CD8-positive, alpha-beta T cell (primary cell): ENCODE measurements at regions of chr6 and their contacts with region 1.

Region 1: DNA sequence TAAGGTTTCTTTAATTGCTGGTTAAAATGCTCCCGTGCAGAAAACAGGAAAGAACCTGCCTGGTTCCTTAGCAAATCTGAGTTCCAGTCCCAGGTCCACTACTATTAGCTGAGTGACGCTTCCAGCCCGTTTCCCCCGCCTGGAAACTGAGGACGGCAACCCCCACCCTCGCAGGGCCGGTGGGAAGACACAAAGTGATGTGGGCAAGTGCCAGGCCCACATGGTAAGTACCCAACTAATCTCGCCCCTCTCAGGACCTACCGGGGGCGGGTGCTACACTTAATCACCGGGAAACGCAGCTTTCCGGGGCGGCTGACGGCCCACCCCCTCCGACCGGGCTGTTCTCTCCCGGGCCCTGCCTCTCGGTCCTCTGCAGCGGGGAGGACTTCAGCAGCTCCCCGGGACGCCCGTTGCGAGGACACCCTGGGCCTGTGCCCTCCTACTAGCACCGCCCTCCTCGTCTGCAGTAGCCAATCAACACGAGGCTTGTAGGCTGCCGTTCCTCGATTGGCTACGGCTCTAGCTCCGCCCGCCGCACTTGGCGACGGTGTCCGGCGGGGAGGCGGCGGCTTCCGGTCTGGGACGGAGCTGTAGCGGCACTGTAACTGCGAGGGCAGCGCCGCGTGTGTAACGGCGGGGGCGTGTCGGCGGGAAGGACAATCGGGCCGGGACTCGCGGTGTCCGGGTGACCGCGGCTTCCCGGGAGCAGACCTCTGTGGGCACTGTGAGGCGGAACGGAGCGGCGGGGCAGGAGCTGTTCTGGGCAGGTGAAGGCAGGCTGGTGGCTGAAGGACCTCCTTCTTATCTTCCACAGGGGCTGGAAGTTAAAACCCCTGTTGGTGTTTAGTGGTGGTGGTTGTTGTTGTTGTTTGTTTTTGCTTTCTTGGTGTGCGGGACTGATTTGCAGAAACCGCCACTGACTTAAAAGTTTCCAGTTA is at the start of gene ZBTB9:
- DNase-seq: peak; percentile 86 to 96 (median 93)
- ATAC-seq: peak; percentile 98
- H3K4me3 ChIP-seq: peak within 1 kb of the TSS; percentile 92 to 93
- H3K4me3 Mint-ChIP-seq: peak within 1 kb of the TSS; percentile 98
- H3K27ac ChIP-seq: peak within 1 kb of the TSS; percentile 75 to 81
- H3K27ac Mint-ChIP-seq: peak within 1 kb of the TSS; percentile 97
- H3K4me1 ChIP-seq: peaks cover 23% of the 10 kb centered on the region
- H3K4me1 Mint-ChIP-seq: peaks cover 43% of the 10 kb centered on the region
- H3K27me3 ChIP-seq: no peaks in the 10 kb centered on the region
- H3K27me3 Mint-ChIP-seq: no peaks in the 10 kb centered on the region
- CTCF ChIP-seq: no peak
- total RNA-seq, gene ZBTB9: 7.1 to 9.5 TPM

Region 2: DNA sequence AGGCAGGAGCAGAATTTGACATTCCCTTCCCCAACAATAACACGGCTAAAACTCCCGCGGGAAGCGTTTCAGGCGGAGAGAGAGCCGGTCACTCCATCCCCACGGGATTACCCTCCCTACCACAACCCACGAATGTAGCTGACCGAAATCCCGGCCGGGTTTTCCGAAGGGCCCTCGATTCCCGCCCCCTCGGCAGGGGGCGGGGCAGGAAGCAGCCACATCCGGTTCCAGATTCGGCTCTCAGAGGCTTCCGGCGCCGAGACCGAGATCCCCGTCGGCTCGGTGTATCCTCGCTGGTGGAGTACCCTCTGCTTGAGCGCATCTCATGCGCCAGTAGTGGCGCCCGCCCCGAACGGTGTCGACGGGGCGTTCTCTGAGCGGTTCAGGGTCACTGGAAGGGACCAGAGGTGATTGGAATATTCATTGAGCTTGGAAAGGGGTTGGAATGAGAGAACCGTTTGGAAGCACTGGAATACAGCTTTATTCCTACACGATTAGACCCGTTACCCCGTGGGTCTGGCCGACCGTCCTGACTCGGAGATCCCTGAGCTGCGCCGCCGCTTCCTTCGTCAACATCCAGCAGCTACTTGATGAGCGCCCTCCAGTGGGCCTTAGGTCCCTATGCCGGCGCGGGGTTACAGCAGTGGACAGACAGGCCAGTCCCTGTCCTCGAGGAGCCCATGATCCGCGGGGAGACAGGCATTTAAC is 154.9 kb before region 1 on chr6:
- CTCF ChIA-PET with region 1: no interaction called
- POLR2A ChIA-PET with region 1: interaction called, 3 read pairs
- intact Hi-C with region 1: loop called in 1 of 2 experiments (anchors 1 kb)
- DNase-seq: peak; percentile 82 to 97 (median 94)
- ATAC-seq: peak; percentile 83
- H3K4me3 ChIP-seq: peak overlapping the region; percentile 88 to 91
- H3K4me3 Mint-ChIP-seq: peak overlapping the region; percentile 99
- H3K27ac ChIP-seq: peak overlapping the region; percentile 83 to 96
- H3K27ac Mint-ChIP-seq: peak overlapping the region; percentile 99
- H3K4me1 ChIP-seq: peaks cover 14% of the 10 kb centered on the region
- H3K4me1 Mint-ChIP-seq: peaks cover 41% of the 10 kb centered on the region
- H3K27me3 ChIP-seq: no peaks in the 10 kb centered on the region
- H3K27me3 Mint-ChIP-seq: no peaks in the 10 kb centered on the region
- CTCF ChIP-seq: peak; percentile 70

Region 3: DNA sequence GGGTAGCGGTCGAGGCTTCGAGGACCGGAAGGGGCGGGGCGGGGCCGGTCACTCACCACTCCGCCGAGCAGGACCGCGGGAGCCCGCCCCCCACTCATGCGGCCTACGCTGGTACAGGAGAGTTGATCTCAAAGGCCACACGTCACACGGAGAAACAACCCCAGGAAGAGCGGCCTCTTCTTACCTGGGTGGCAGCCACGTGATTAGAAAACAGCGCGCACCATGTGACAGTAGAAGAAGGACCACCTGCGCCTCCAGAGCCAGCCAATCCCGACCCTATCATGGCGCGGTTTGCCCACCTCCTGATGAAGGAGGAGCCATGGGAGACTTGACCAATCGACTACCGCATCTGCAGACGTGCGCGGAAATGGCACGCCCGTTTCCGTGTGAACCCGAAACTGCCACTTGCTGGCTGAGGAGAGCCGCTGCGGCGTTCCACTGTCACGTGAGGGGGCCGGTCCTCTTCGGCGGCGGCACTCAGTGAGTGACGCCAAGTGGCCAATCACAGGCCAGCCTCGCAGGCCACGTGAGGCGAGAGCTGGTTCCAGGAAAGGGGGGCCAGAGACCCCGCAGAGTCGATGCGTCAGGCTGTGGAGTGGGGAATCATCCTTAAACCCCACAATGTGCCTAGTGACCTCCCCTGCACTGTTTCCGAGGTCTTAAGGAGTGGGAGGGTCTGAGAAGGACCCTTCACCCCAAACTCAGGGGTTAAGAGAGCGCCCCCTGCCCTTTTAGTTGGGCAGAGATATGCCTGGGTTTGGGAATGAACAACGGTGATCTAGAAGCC is 36.2 kb before region 1 on chr6 and contains the start of gene CUTA:
- CTCF ChIA-PET with region 1: interaction called, 4 read pairs
- POLR2A ChIA-PET with region 1: interaction called, 6 read pairs
- intact Hi-C with region 1: loop called in 1 of 2 experiments (anchors 2 kb)
- DNase-seq: peak; percentile 96 to 100 (median 99)
- ATAC-seq: peak; percentile 87
- H3K4me3 ChIP-seq: peak within 1 kb of the TSS; percentile 68 to 70
- H3K4me3 Mint-ChIP-seq: peak within 1 kb of the TSS; percentile 94
- H3K27ac ChIP-seq: peak within 1 kb of the TSS; percentile 83 to 88
- H3K27ac Mint-ChIP-seq: peak within 1 kb of the TSS; percentile 97
- H3K4me1 ChIP-seq: peaks cover 68% of the 10 kb centered on the region
- H3K4me1 Mint-ChIP-seq: peaks cover 83% of the 10 kb centered on the region
- H3K27me3 ChIP-seq: no peaks in the 10 kb centered on the region
- H3K27me3 Mint-ChIP-seq: no peaks in the 10 kb centered on the region
- CTCF ChIP-seq: peak; percentile 27
- total RNA-seq, gene CUTA: 159 to 177 TPM

Region 4: DNA sequence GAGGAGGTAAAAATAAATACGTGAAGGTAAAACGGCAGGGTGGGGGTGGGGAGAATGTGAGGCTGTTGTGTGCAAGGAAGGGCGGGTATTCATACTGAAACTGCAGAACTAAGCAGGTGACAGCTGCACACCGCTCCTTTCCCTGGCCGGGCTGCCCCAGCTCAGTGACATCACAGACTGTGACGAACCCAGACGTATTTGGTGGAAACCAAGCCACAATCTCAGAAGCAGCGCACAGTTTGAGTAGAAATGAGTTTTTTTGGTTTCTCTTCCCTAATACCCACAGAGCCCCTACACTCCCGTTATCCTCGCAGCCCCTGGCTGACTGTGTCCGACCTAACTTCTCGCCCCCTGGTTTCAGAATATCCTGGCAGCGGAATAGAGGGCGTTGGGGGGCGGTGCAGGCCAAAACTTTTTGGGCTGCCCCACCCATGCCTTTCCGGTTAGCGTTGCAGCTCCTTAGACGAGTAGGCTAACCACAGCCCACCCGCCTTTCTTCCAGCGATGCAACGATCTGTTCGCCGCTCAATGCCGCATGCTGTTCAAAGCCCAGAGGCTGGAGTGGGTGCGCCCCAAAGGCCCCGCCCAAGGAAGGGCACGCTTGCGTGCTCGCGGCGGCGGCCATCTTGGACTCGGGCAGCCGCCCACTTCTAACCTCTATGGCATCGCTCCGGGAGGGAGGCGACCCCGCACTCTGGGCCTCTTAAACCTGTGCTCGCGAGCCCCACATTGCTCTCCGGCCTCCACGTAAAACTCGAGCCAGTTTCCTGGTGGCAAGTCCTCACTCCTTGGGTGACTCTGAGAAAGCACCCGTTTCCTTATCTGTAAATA is 116.7 kb after region 1 on chr6:
- CTCF ChIA-PET with region 1: no interaction called
- POLR2A ChIA-PET with region 1: interaction called, 16 read pairs
- intact Hi-C with region 1: loop called (anchors 1 kb)
- DNase-seq: peak; percentile 86 to 98 (median 92)
- ATAC-seq: peak; percentile 86
- H3K4me3 ChIP-seq: peak overlapping the region; percentile 57 to 67
- H3K4me3 Mint-ChIP-seq: peak overlapping the region; percentile 92
- H3K27ac ChIP-seq: peak overlapping the region; percentile 93 to 99
- H3K27ac Mint-ChIP-seq: peak overlapping the region; percentile 100
- H3K4me1 ChIP-seq: peaks cover 20% of the 10 kb centered on the region
- H3K4me1 Mint-ChIP-seq: peaks cover 29% of the 10 kb centered on the region
- H3K27me3 ChIP-seq: no peaks in the 10 kb centered on the region
- H3K27me3 Mint-ChIP-seq: no peaks in the 10 kb centered on the region
- CTCF ChIP-seq: no peak

Region 5: DNA sequence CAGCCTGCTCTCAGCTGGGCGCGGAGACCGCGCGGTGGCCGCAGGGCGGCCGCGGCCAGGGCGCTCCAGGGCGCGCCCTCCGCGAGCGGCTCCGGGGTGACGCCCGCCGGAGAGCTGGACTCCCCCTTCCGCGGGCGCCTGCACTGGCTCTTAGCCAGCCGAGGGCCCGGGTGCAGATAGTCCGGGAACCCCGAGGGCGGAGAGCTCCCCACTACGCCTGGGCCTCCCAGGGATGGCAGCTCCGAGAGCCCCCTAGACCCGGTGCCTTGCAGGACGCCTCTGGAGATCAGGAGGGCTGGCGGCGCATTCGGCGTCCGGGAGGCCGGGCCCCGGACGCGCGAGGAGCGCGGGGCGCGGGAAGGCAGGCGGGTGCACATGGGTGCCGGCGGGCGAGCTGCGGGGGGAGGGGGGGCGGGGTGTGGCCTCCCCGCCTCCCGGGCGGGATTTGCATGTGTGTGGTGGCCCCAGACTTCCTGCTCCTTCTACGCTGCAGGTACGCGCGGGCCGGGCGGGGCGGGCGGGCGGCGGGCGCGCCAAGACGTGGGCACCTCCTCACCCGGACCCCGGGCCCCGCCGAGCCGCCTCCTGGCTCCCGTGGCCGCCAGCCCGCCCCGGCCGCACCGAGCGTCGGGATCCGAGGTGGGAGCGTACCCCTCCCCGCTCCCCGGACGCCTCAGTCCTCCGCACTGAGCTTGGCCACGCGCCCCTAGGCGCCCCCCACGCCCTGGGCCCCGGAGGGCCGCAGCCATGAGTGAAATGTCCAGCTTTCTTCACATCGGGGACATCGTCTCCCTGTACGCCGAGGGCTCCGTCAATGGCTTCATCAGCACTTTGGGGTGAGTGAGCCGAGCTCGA is 166.8 kb after region 1 on chr6 and contains the start of gene ITPR3:
- CTCF ChIA-PET with region 1: no interaction called
- POLR2A ChIA-PET with region 1: no interaction called
- intact Hi-C with region 1: loop called in 1 of 2 experiments (anchors 1 kb)
- DNase-seq: peak; percentile 55 to 92 (median 72)
- ATAC-seq: peak; percentile 84
- H3K4me3 ChIP-seq: peak within 1 kb of the TSS; percentile 79 to 95
- H3K4me3 Mint-ChIP-seq: peak within 1 kb of the TSS; percentile 90
- H3K27ac ChIP-seq: peak within 1 kb of the TSS; percentile 78 to 86
- H3K27ac Mint-ChIP-seq: peak within 1 kb of the TSS; percentile 91
- H3K4me1 ChIP-seq: peaks cover 38% of the 10 kb centered on the region
- H3K4me1 Mint-ChIP-seq: peaks cover 66% of the 10 kb centered on the region
- H3K27me3 ChIP-seq: no peaks in the 10 kb centered on the region
- H3K27me3 Mint-ChIP-seq: no peaks in the 10 kb centered on the region
- CTCF ChIP-seq: no peak
- total RNA-seq, gene ITPR3: 39.5 to 40.1 TPM